ENCODE measurements at regions of chr18 and their contacts with region 1.

Region 1: GRCh38 chr18:45324495-45325113 is 290.7 kb upstream of the SLC14A2 start:
- DNase-seq: peak; percentile 69
- ATAC-seq: peak; percentile 66

Region 2: GRCh38 chr18:45254709-45255082 is 69.9 kb before region 1 on chr18:
- intact Hi-C with region 1: loop called (anchors 5 kb)
- DNase-seq: peak; percentile 86
- ATAC-seq: peak; percentile 92

Measured in Right ventricle myocardium inferior (tissue), 1 donor.